ENCODE measurements at regions of chr10 and their contacts with region 1.

Region 1: DNA sequence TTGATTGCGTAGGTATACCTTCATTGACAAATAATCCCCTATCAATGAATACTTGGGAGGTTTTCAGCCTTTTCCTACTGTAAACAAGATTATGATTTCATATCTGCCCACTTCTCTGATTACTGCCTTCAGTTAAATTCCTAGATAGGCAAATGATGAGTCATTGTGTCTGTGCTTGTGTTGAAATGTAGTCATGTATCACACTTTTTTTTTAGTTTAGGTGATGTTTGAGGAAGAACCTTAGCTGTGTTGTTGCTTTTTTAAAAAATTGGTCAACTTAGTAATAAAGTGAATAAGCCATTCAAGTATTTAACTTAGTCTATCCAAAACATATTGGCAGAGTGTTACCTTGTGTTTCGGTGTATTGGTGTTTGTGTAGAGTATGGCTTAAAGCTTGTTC is 60.0 kb downstream of the WAC start:
- DNase-seq: no peak
- H3K4me3 ChIP-seq: no peak overlapping the region
- H3K27ac ChIP-seq: no peak overlapping the region
- H3K4me1 ChIP-seq: peaks cover 3% of the 10 kb centered on the region
- H3K27me3 ChIP-seq: no peaks in the 10 kb centered on the region
- CTCF ChIP-seq: no peak

Region 2: GRCh38 chr10:28545967-28546644 is 46.8 kb before region 1 on chr10:
- intact Hi-C with region 1: loop called (anchors 10 kb)
- DNase-seq: no peak
- H3K4me3 ChIP-seq: no peak overlapping the region
- H3K27ac ChIP-seq: no peak overlapping the region
- H3K4me1 ChIP-seq: peaks cover 5% of the 10 kb centered on the region
- H3K27me3 ChIP-seq: no peaks in the 10 kb centered on the region
- CTCF ChIP-seq: no peak

Measured in colonic mucosa (tissue), 4 donors.